Activated CD8-positive, alpha-beta memory T cell treated with anti-CD3 and anti-CD28 coated beads, Interleukin-2, amount 10 ng/mL, durations not matched to agents 7 days and 5 days (primary cell): ENCODE measurements at regions of chr19 and their contacts with region 1.

Region 1: GRCh38 chr19:49097455-49098288 is 12.4 kb downstream of the SNRNP70 start:
- DNase-seq: peak; percentile 84
- ATAC-seq: peak; percentile 87
- H3K4me3 Mint-ChIP-seq: no peak overlapping the region
- H3K27ac Mint-ChIP-seq: peak overlapping the region; percentile 80
- H3K4me1 Mint-ChIP-seq: peaks cover 24% of the 10 kb centered on the region
- H3K27me3 Mint-ChIP-seq: no peaks in the 10 kb centered on the region

Region 2: GRCh38 chr19:48999481-49000325 is 98.0 kb before region 1 on chr19:
- CTCF ChIA-PET with region 1: interaction called, 11 read pairs
- DNase-seq: peak; percentile 81
- ATAC-seq: peak; percentile 84
- H3K4me3 Mint-ChIP-seq: no peak overlapping the region
- H3K27ac Mint-ChIP-seq: no peak overlapping the region
- H3K4me1 Mint-ChIP-seq: peaks cover 25% of the 10 kb centered on the region
- H3K27me3 Mint-ChIP-seq: no peaks in the 10 kb centered on the region

Region 3: GRCh38 chr19:49016067-49016839 is 81.4 kb before region 1 on chr19:
- CTCF ChIA-PET with region 1: no interaction called
- DNase-seq: no peak
- ATAC-seq: no peak
- H3K4me3 Mint-ChIP-seq: no peak overlapping the region
- H3K27ac Mint-ChIP-seq: no peak overlapping the region
- H3K4me1 Mint-ChIP-seq: peaks cover 26% of the 10 kb centered on the region
- H3K27me3 Mint-ChIP-seq: peaks cover 14% of the 10 kb centered on the region

Region 4: GRCh38 chr19:49118565-49119410 is 21.1 kb after region 1 on chr19 and contains the start of gene C19orf73:
- CTCF ChIA-PET with region 1: interaction called, 63 read pairs
- DNase-seq: peak; percentile 95
- ATAC-seq: peak; percentile 82
- H3K4me3 Mint-ChIP-seq: peak within 1 kb of the TSS; percentile 73
- H3K27ac Mint-ChIP-seq: peak within 1 kb of the TSS; percentile 81
- H3K4me1 Mint-ChIP-seq: peaks cover 28% of the 10 kb centered on the region
- H3K27me3 Mint-ChIP-seq: peaks cover 22% of the 10 kb centered on the region
- total RNA-seq, gene C19orf73: 1.6 to 1.8 TPM

Region 5: DNA sequence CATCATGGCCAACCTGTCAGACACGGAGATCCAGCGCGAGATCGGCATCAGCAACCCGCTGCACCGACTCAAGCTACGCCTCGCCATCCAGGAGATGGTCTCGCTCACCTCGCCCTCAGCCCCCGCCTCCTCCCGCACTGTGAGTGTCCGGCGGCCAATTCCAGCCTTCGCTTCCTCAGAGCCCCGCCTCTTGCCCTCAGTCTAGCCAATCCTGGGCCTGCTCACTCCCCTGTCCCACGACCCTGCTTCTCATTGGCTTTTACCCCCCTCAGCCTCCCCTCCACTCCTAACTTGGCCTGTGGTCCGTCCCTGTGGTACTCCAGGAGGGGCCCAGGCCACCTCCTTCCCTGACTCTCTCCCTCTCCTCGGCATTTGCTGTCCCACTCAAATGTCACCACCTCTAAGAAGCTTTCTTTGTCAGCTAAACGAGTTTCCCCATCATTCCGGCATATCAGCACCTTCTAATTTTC is 45.2 kb after region 1 on chr19:
- CTCF ChIA-PET with region 1: interaction called, 22 read pairs
- DNase-seq: peak; percentile 85
- ATAC-seq: peak; percentile 96
- H3K4me3 Mint-ChIP-seq: peak overlapping the region; percentile 71
- H3K27ac Mint-ChIP-seq: no peak overlapping the region
- H3K4me1 Mint-ChIP-seq: peaks cover 16% of the 10 kb centered on the region
- H3K27me3 Mint-ChIP-seq: peaks cover 22% of the 10 kb centered on the region

Region 6: DNA sequence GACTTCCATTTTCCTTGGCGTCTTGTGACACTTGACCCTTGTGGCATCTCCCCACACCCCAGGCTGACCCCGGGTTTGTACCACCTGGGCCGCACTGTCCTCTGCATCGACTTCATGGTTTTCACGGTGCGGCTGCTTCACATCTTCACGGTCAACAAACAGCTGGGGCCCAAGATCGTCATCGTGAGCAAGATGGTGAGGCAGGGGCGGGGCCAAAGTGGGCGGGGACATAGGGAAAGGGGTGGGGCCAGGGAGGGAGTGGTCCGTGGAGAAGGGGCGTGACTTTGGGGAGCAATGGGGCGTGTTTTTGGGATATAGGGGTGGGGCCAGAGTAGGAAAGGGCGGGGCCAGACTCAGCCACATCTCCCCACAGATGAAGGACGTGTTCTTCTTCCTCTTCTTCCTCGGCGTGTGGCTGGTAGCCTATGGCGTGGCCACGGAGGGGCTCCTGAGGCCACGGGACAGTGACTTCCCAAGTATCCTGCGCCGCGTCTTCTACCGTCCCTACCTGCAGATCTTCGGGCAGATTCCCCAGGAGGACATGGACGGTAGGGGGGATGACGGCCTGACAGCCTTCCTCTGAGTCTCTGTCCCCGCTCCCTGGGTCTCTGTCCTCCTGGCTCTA is 102.7 kb after region 1 on chr19:
- CTCF ChIA-PET with region 1: interaction called, 52 read pairs
- DNase-seq: no peak
- ATAC-seq: no peak
- H3K4me3 Mint-ChIP-seq: no peak overlapping the region
- H3K27ac Mint-ChIP-seq: no peak overlapping the region
- H3K4me1 Mint-ChIP-seq: peaks cover 6% of the 10 kb centered on the region
- H3K27me3 Mint-ChIP-seq: peaks cover 7% of the 10 kb centered on the region

Region 7: DNA sequence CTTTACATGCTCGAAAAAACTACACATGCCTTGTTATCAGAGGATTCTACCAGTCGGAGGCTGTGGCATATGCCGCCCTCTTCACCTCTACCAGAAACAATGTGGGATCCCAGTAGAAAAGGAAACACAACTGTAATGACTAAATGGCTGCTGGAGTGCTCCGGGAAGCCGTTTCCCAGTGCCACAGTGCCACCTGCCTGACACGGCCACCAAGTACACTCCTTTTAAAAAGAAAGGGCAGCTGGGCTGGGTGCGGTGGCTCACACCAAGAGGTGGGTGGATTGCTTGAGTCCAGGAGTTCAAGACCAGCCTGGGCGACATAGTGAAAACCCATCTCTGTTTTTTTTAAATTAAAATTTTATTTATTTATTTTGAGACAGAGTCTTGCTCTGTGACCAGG is 127.2 kb after region 1 on chr19:
- CTCF ChIA-PET with region 1: interaction called, 13 read pairs
- DNase-seq: peak; percentile 46
- ATAC-seq: no peak
- H3K4me3 Mint-ChIP-seq: no peak overlapping the region
- H3K27ac Mint-ChIP-seq: no peak overlapping the region
- H3K4me1 Mint-ChIP-seq: peaks cover 5% of the 10 kb centered on the region
- H3K27me3 Mint-ChIP-seq: peaks cover 6% of the 10 kb centered on the region